ENCODE measurements at regions of chrX and their contacts with region 1.

Region 1: GRCh38 chrX:123236859-123237258 is 52.8 kb downstream of the GRIA3 start:
- DNase-seq: no peak
- H3K4me3 ChIP-seq: no peak overlapping the region
- H3K27ac ChIP-seq: no peak overlapping the region
- H3K4me1 ChIP-seq: no peaks in the 10 kb centered on the region
- H3K27me3 ChIP-seq: peaks cover 0 to 10% of the 10 kb centered on the region in 2 donors
- CTCF ChIP-seq: no peak
- POLR2A ChIP-seq: no peak

Region 2: GRCh38 chrX:123173833-123174232 is 63.0 kb before region 1 on chrX:
- intact Hi-C with region 1: loop called (anchors 2 kb)
- DNase-seq: no peak
- H3K4me3 ChIP-seq: no peak overlapping the region
- H3K27ac ChIP-seq: no peak overlapping the region
- H3K4me1 ChIP-seq: no peaks in the 10 kb centered on the region
- H3K27me3 ChIP-seq: peaks cover 0 to 3% of the 10 kb centered on the region in 2 donors
- CTCF ChIP-seq: no peak
- POLR2A ChIP-seq: no peak

Region 3: DNA sequence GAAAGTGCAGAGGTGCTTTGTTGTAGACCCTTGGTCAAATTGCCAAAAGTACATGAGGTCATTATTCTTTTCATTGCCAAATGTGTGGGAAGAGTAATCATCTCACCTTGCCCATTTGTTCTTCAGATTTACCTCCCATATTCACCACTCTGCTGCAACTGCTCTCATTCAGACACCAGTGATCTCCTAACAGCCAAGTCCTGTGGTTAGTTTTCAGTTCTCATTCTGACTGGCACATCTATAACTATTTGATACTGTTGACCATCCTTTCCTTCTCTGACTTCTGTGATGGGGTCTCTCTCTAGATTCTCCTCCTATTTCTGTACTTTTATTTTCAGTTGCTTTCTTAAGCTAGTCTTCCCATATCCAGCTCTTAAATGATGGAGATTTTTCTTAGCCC is 13.0 kb before region 1 on chrX:
- intact Hi-C with region 1: no loop called
- DNase-seq: no peak
- H3K4me3 ChIP-seq: no peak overlapping the region
- H3K27ac ChIP-seq: no peak overlapping the region
- H3K4me1 ChIP-seq: no peaks in the 10 kb centered on the region
- H3K27me3 ChIP-seq: no peaks in the 10 kb centered on the region
- CTCF ChIP-seq: no peak
- POLR2A ChIP-seq: no peak

Measured in breast epithelium (tissue), 4 donors.